ENCODE measurements at regions of chr21 and their contacts with region 1.

Region 1: GRCh38 chr21:43789276-43790009 is at the start of gene RRP1:
- DNase-seq: peak; percentile 99
- ATAC-seq: peak; percentile 95
- H3K4me3 Mint-ChIP-seq: peak within 1 kb of the TSS; percentile 92
- H3K27ac Mint-ChIP-seq: peak within 1 kb of the TSS; percentile 91
- H3K4me1 Mint-ChIP-seq: peaks cover 19% of the 10 kb centered on the region
- H3K27me3 Mint-ChIP-seq: no peaks in the 10 kb centered on the region
- CTCF ChIP-seq: peak; percentile 53
- total RNA-seq, gene RRP1: 36.8 and 37.0 TPM in 2 replicates

Region 2: GRCh38 chr21:42892931-42893755 is 896.3 kb before region 1 on chr21 and contains the start of gene NDUFV3:
- CTCF ChIA-PET with region 1: no interaction called
- POLR2A ChIA-PET with region 1: no interaction called
- intact Hi-C with region 1: loop called (anchors 2 kb)
- DNase-seq: peak; percentile 96
- ATAC-seq: peak; percentile 96
- H3K4me3 Mint-ChIP-seq: peak within 1 kb of the TSS; percentile 87
- H3K27ac Mint-ChIP-seq: peak within 1 kb of the TSS; percentile 90
- H3K4me1 Mint-ChIP-seq: peaks cover 13% of the 10 kb centered on the region
- H3K27me3 Mint-ChIP-seq: no peaks in the 10 kb centered on the region
- CTCF ChIP-seq: no peak
- total RNA-seq, gene NDUFV3: 21.2 and 27.1 TPM in 2 replicates

Region 3: DNA sequence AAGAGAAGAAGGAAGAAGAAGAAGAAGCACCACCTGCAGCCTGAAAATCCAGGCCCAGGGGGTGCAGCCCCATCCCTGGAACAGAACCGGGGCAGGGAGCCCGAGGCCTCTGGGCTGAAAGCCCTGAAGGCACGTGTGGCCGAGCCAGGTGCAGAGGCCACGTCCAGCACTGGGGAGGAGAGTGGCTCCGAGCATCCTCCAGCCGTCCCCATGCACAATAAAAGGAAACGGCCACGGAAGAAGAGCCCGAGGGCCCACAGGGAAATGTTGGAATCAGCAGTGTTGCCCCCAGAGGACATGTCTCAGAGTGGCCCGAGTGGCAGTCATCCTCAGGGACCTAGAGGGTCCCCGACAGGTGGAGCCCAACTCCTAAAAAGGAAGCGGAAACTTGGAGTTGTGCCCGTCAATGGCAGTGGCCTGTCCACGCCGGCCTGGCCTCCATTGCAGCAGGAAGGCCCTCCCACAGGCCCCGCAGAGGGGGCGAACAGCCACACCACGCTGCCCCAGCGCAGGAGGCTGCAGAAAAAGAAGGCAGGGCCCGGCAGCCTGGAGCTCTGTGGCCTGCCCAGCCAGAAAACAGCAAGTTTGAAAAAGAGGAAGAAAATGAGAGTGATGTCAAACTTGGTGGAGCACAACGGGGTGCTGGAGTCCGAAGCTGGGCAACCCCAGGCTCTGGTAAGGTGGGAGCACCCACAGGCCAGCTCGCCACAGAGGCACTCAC is 101.7 kb before region 1 on chr21:
- CTCF ChIA-PET with region 1: no interaction called
- POLR2A ChIA-PET with region 1: no interaction called
- intact Hi-C with region 1: loop called (anchors 1 kb)
- DNase-seq: peak; percentile 28
- ATAC-seq: peak; percentile 86
- H3K4me3 Mint-ChIP-seq: no peak overlapping the region
- H3K27ac Mint-ChIP-seq: peak overlapping the region; percentile 56
- H3K4me1 Mint-ChIP-seq: peaks cover 17% of the 10 kb centered on the region
- H3K27me3 Mint-ChIP-seq: no peaks in the 10 kb centered on the region
- CTCF ChIP-seq: no peak

Region 4: DNA sequence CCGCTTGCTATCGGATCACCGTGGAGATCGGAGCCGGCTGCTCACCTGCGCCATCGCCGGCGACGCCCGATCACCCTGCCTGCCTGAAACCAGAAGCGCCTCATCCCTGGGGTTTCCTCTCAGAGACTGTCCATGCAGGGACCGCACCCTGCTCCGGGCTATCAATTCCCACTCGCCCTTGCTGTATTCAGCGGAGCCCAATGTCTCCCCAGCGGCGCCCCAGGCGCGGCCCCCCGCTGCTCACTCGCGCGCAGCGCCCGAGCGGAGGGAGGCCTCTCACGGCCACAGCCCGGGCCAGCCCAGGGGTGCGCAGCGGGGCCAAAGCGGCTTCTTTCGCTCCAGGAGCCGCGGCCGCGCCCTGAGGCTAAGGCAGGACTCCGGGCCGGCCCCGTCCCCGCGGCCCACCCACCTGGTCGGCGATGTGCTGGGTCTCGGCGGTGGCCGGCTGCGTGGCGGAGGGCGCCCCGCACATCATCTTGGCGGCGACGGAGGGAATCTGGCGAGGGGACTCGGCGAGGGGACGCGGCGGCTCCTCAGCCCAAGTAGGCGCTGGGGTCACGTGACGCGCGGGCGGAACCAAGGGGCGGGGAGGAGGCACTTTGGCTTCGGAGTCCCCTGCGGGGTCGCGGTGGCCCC is 13.5 kb before region 1 on chr21 and contains the start of gene CSTB:
- CTCF ChIA-PET with region 1: no interaction called
- POLR2A ChIA-PET with region 1: no interaction called
- intact Hi-C with region 1: loop called (anchors 1 kb)
- DNase-seq: peak; percentile 78
- ATAC-seq: peak; percentile 78
- H3K4me3 Mint-ChIP-seq: peak within 1 kb of the TSS; percentile 84
- H3K27ac Mint-ChIP-seq: peak within 1 kb of the TSS; percentile 68
- H3K4me1 Mint-ChIP-seq: peaks cover 34% of the 10 kb centered on the region
- H3K27me3 Mint-ChIP-seq: no peaks in the 10 kb centered on the region
- CTCF ChIP-seq: no peak
- total RNA-seq, gene CSTB: 16.0 and 17.1 TPM in 2 replicates

Region 5: DNA sequence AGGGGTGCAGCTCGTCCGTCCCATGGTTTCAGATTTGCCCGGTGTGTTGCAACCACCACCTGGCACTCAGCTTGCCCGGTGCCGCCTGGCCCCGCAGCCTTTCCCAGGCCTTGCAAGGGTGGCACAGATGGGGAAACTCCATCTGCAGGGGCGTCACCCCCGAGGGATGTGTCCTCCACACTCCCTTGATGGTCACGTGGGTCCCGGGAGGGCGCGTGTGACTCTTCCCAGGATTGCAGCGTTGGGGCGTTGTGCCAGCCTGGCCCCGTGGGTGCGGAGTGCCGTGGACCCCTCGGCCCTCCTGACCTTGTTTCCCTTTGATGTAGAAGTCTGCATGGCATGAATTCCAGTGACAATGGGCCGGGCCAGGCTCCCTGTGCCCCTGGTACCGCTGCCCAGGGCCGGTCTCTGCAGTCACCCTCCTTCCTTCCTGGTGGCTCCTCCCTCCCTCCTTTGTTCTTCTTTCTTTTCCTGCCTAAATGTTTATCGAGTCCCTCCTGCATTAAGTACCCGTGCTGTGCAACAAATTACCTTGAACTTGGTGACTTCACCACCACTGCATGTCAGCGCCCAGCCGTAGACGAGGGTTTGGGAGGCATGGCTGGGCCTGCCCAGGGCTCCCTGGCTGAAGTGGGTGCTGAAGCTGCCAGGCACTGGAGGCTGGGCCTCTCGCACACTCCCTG is 22.8 kb after region 1 on chr21:
- CTCF ChIA-PET with region 1: no interaction called
- POLR2A ChIA-PET with region 1: no interaction called
- intact Hi-C with region 1: no loop called
- DNase-seq: no peak
- ATAC-seq: no peak
- H3K4me3 Mint-ChIP-seq: no peak overlapping the region
- H3K27ac Mint-ChIP-seq: no peak overlapping the region
- H3K4me1 Mint-ChIP-seq: peaks cover 13% of the 10 kb centered on the region
- H3K27me3 Mint-ChIP-seq: peaks cover 5% of the 10 kb centered on the region
- CTCF ChIP-seq: no peak

Region 6: DNA sequence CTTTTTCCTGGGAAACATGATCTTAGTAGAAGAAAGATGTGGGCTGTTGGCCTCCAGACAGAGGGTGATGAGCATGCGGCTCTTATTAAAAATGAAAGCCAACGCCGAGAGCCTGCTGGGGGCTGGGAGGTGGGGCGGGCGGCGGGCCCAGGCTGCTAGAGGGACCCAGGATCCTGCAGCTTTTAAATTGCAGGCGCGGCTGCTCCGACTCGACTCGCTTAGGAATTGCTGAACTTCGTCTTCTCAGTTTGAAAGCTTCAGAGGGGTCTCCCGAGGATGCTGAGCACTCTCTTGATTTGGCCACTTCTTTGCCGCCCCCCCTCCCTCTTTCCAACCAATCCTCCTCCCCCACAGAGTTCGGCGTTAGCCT is 76.8 kb after region 1 on chr21:
- CTCF ChIA-PET with region 1: no interaction called
- POLR2A ChIA-PET with region 1: no interaction called
- intact Hi-C with region 1: loop called (anchors 1 kb)
- DNase-seq: no peak
- ATAC-seq: peak; percentile 29
- H3K4me3 Mint-ChIP-seq: peak overlapping the region; percentile 82
- H3K27ac Mint-ChIP-seq: peak overlapping the region; percentile 83
- H3K4me1 Mint-ChIP-seq: peaks cover 46% of the 10 kb centered on the region
- H3K27me3 Mint-ChIP-seq: no peaks in the 10 kb centered on the region
- CTCF ChIP-seq: no peak

Region 7: GRCh38 chr21:43884012-43884860 is 94.8 kb after region 1 on chr21:
- CTCF ChIA-PET with region 1: no interaction called
- POLR2A ChIA-PET with region 1: no interaction called
- intact Hi-C with region 1: no loop called
- DNase-seq: no peak
- ATAC-seq: peak; percentile 58
- H3K4me3 Mint-ChIP-seq: no peak overlapping the region
- H3K27ac Mint-ChIP-seq: no peak overlapping the region
- H3K4me1 Mint-ChIP-seq: peaks cover 35% of the 10 kb centered on the region
- H3K27me3 Mint-ChIP-seq: no peaks in the 10 kb centered on the region
- CTCF ChIP-seq: no peak

Region 8: DNA sequence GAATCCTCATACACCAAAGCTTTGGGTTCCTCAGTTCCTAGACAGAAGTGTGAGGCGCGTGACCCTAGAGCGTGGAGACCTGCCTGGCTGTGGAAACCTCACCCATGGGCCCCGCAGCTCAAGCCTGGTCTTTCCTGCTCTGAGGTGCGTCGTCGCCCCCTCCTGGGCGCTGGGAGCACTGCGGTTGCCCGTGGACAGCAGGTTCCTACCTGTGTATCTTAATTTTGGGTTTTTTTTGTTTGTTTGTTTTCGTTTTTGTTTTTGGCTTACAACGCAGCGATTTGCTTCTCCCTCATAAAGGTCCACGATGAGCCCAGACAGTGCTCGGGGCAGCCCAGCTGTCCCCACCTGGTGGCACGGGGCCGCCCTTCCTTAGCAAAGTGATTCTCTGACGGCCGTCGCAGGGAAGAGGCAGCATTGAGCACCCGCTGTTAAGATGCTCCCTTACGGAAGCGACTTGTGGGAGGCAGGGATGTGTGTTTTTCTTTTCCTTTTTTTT is 186.1 kb after region 1 on chr21:
- CTCF ChIA-PET with region 1: interaction called, 3 read pairs
- POLR2A ChIA-PET with region 1: interaction called, 10 read pairs
- intact Hi-C with region 1: loop called (anchors 1 kb)
- DNase-seq: peak; percentile 76
- ATAC-seq: peak; percentile 98
- H3K4me3 Mint-ChIP-seq: no peak overlapping the region
- H3K27ac Mint-ChIP-seq: no peak overlapping the region
- H3K4me1 Mint-ChIP-seq: peaks cover 9% of the 10 kb centered on the region
- H3K27me3 Mint-ChIP-seq: no peaks in the 10 kb centered on the region
- CTCF ChIP-seq: peak; percentile 54

Measured in activated B cell treated with CpG ODN at 0.5 μM for 24 hours (primary cell).